Activated T-helper 2 cell treated with anti-CD3 and anti-CD28 coated beads, Interferon-gamma antibody, Interleukin-2, Interleukin-4, amounts not matched to agents 10 μg/mL and 5 μg/mL and 100 μg/mL, durations not matched to agents 14 hours and 24 hours and 36 hours (primary cell): ENCODE measurements at regions of chr4 and their contacts with region 1.

Region 1: DNA sequence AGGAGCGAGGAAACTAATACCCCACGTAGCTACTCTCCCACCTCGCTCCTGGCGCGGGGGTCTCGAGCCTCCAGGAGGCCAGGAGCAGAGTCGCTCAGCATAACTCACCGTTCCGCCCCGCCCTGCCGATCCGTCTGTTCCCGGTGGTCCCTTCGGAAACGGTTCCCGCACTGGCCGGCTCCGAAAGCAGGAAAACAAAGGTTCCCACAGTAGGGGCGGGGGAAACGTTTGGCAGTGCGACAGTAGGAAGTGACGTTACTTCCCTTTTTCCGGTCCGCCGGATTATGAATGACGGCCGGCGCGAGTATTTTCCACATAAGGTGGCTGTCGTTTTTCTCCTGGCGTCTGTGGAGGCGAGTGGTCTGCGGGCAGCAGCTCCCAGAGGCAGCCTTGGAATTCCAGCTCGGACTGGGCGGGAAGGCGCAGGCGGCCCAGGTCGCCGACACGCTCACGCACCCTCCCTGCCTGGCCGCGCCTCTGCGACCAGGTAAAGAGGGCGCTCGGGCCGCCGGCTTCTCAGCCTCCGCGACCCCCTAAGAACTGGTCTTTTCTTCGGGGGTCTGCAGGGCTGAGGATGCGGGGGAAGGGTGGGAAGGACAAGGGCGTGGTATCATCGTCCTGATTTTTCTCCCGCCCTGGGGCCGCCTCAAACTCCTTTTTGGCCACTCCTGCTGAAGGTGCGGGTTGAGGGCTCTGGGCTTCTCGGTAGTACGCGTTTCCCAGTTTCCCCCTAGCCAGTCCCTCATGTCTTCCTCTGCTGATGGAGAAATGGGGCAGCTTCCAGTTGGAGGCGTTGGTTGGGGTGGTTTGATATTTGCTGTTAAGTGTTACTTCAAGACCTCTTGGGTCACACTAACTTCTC is at the starts of genes GSTCD and INTS12:
- DNase-seq: peak; percentile 82
- H3K4me3 Mint-ChIP-seq: peak within 1 kb of the TSS; percentile 98
- H3K27ac Mint-ChIP-seq: peak within 1 kb of the TSS; percentile 94
- H3K4me1 Mint-ChIP-seq: peaks cover 26% of the 10 kb centered on the region
- H3K27me3 Mint-ChIP-seq: no peaks in the 10 kb centered on the region
- total RNA-seq, gene GSTCD: 15.7 and 16.7 TPM in 2 replicates
- total RNA-seq, gene INTS12: 18.5 and 22.0 TPM in 2 replicates

Region 2: GRCh38 chr4:105666693-105667092 is 42.1 kb before region 1 on chr4:
- intact Hi-C with region 1: no loop called
- DNase-seq: no peak
- H3K4me3 Mint-ChIP-seq: no peak overlapping the region
- H3K27ac Mint-ChIP-seq: no peak overlapping the region
- H3K4me1 Mint-ChIP-seq: no peaks in the 10 kb centered on the region
- H3K27me3 Mint-ChIP-seq: peaks cover 9% of the 10 kb centered on the region

Region 3: DNA sequence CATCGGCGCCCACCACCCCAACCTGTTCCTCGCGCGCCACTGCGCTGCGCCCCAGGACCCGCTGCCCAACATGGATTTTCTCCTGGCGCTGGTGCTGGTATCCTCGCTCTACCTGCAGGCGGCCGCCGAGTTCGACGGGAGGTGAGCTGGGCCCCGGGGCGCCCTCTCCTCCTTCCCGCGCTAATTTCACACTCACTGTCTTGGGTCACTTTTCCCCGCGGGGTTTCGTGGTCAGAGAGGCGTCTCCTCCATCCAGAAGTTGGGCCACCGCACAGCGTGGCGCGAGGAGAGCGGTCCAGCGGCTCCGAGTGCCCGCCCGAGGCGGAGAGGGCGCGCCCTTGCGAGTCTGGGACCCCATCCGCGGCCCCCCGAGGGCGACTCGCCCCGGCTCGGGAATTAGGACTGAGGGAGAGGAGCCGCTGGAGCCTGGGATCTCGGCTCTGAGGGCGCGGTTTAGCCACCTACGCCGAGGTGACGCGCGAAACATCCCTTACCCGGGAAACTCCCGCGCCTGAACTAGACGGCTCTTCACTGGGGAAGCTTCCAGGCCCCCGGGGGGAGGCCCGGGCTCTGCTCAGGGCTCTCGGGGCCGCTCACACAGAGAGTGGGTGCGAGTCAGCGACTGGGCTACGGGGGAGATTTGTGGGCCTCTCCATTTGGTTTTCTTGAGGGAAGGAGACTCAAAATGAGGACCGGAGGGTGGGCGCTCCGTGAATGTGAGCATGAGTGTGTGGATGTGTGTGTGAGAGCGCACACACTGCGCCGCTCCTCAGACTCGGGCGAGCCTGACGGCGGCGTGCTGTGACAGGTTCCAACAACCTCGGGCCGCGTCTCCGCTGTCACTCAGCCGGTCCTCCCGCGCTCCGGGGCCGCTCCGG is 187.1 kb after region 1 on chr4:
- intact Hi-C with region 1: loop called (anchors 10 kb)
- DNase-seq: no peak
- H3K4me3 Mint-ChIP-seq: peak overlapping the region; percentile 77
- H3K27ac Mint-ChIP-seq: peak overlapping the region; percentile 62
- H3K4me1 Mint-ChIP-seq: peaks cover 10% of the 10 kb centered on the region
- H3K27me3 Mint-ChIP-seq: peaks cover 82% of the 10 kb centered on the region